MCF 10A (cell line): ENCODE measurements at regions of chr7 and their contacts with region 1.

Region 1: GRCh38 chr7:42192851-42193461 is 44.1 kb downstream of the GLI3 start:
- DNase-seq: peak; percentile 53
- H3K4me3 Mint-ChIP-seq: peak overlapping the region; percentile 57
- H3K27ac Mint-ChIP-seq: peak overlapping the region; percentile 85
- H3K4me1 Mint-ChIP-seq: peaks cover 66% of the 10 kb centered on the region
- H3K27me3 Mint-ChIP-seq: no peaks in the 10 kb centered on the region
- CTCF ChIP-seq: no peak

Region 2: GRCh38 chr7:41630741-41631140 is 562.2 kb before region 1 on chr7:
- CTCF ChIA-PET with region 1: no interaction called
- POLR2A ChIA-PET with region 1: no interaction called
- intact Hi-C with region 1: no loop called
- DNase-seq: no peak
- H3K4me3 Mint-ChIP-seq: no peak overlapping the region
- H3K27ac Mint-ChIP-seq: no peak overlapping the region
- H3K4me1 Mint-ChIP-seq: no peaks in the 10 kb centered on the region
- H3K27me3 Mint-ChIP-seq: no peaks in the 10 kb centered on the region
- CTCF ChIP-seq: no peak

Region 3: GRCh38 chr7:42208572-42208971 is 15.6 kb after region 1 on chr7:
- CTCF ChIA-PET with region 1: interaction called, 5 read pairs
- POLR2A ChIA-PET with region 1: interaction called, 11 read pairs
- intact Hi-C with region 1: no loop called
- DNase-seq: no peak
- H3K4me3 Mint-ChIP-seq: no peak overlapping the region
- H3K27ac Mint-ChIP-seq: no peak overlapping the region
- H3K4me1 Mint-ChIP-seq: no peaks in the 10 kb centered on the region
- H3K27me3 Mint-ChIP-seq: no peaks in the 10 kb centered on the region
- CTCF ChIP-seq: no peak

Region 4: DNA sequence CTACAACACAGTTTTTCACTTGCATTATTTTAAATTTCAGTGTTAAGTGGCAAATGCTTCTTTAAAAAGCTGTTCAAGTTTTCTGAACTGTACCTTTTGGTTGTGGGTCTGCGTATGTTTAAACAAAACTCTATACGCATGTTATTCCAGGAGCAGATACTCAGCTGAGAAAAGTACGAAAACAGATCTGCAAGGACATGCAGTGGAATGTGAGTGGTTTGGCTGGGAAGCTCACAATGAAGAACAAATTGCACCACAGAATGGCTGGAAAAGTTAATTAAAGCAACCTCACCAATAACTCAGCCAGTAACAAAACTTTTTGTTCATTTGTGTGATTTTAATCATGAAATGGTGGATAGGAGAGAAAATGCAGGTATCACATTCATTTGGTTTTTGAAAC is 26.5 kb after region 1 on chr7:
- CTCF ChIA-PET with region 1: interaction called, 3 read pairs
- POLR2A ChIA-PET with region 1: interaction called, 33 read pairs
- intact Hi-C with region 1: no loop called
- DNase-seq: peak; percentile 64
- H3K4me3 Mint-ChIP-seq: peak overlapping the region; percentile 50
- H3K27ac Mint-ChIP-seq: peak overlapping the region; percentile 59
- H3K4me1 Mint-ChIP-seq: peaks cover 33% of the 10 kb centered on the region
- H3K27me3 Mint-ChIP-seq: no peaks in the 10 kb centered on the region
- CTCF ChIP-seq: no peak